ENCODE measurements at regions of chr19 and their contacts with region 1.

Region 1: DNA sequence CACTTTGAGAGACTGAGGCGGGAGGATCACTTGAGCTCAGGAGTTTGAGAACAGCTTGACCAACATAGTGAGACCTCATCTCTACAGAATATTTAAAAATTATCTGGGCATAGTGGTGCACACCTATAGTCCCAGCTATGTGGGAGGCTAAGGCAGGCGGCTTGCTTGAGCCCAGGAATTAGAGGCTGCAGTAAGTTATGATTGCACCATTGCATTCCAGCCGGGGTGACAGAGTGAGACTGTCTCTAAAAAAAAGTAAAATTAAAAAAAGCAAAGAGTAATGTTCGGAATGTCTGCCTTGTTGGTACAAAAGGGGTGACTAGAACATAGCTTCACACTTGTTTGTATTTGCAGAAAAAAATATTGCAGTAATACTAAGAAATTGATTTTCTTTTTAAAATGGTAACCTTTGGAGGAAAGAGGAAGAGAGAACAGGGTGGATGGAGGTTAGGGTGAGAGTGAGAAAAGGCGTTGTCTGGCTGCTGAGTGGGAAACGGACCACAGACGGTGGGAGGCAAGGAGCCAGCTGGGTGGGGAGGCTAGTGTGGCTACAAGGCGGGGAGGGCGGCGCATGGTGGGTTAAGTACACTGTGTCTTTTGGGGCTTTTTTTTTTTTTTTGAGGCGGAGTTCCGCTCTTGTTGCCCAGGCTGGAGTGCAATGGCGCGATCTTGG is 10.2 kb downstream of the PPP1R14A start:
- DNase-seq: no peak
- H3K4me3 ChIP-seq: no peak overlapping the region
- H3K27ac ChIP-seq: no peak overlapping the region
- H3K4me1 ChIP-seq: peaks cover 7% of the 10 kb centered on the region
- H3K27me3 ChIP-seq: no peaks in the 10 kb centered on the region
- CTCF ChIP-seq: no peak

Region 2: GRCh38 chr19:38022791-38023670 is 222.9 kb before region 1 on chr19:
- CTCF ChIA-PET with region 1: interaction called, 16 read pairs
- POLR2A ChIA-PET with region 1: no interaction called
- intact Hi-C with region 1: no loop called
- DNase-seq: no peak
- H3K4me3 ChIP-seq: no peak overlapping the region
- H3K27ac ChIP-seq: no peak overlapping the region
- H3K4me1 ChIP-seq: no peaks in the 10 kb centered on the region
- H3K27me3 ChIP-seq: no peaks in the 10 kb centered on the region
- CTCF ChIP-seq: no peak

Region 3: DNA sequence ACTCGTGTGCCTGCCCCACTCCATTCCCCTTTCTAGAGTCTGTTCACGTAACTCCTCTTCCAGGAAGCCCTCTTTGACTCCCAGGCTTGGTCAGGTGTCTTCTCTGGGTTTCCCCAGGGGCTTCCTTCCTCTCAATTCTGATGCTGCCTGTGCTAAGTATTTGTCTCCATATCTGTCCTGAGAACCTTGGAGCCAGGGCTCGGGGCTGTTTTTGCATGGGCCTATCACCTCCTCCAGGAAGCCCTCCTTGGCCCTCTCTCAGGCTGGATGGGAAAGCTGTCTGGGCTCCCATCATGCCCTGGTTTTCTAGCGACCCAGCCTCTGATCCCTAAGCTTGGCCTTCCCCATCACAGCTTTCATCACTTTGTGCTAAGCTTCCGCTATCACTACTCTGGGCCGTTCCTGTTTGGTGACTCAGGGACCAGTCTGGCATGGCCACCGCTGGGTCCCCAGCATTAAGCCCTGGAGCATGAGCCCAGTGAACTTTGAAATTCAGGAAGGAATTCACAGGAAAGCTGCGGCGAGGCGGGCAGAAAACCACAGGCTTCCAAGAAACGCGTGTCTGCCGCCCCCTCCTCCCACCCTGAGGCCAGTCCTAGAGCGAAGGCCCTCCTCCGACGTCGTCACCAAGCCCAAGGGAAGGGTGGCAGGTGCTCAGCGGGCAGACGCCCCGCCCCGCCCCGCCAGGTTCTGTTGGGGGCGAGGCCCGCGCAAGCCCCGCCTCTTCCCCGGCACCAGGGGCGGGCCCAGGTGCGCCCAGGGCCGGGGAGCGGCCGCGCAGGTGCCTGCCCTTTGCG is 17.9 kb after region 1 on chr19:
- CTCF ChIA-PET with region 1: interaction called, 9 read pairs
- POLR2A ChIA-PET with region 1: no interaction called
- intact Hi-C with region 1: loop called (anchors 2 kb)
- DNase-seq: peak; percentile 97 to 99
- H3K4me3 ChIP-seq: peak overlapping the region; percentile 34; the same call in 1 of the 2 replicates
- H3K27ac ChIP-seq: peak overlapping the region; percentile 94
- H3K4me1 ChIP-seq: peaks cover 35% of the 10 kb centered on the region
- H3K27me3 ChIP-seq: no peaks in the 10 kb centered on the region
- CTCF ChIP-seq: no peak

Region 4: DNA sequence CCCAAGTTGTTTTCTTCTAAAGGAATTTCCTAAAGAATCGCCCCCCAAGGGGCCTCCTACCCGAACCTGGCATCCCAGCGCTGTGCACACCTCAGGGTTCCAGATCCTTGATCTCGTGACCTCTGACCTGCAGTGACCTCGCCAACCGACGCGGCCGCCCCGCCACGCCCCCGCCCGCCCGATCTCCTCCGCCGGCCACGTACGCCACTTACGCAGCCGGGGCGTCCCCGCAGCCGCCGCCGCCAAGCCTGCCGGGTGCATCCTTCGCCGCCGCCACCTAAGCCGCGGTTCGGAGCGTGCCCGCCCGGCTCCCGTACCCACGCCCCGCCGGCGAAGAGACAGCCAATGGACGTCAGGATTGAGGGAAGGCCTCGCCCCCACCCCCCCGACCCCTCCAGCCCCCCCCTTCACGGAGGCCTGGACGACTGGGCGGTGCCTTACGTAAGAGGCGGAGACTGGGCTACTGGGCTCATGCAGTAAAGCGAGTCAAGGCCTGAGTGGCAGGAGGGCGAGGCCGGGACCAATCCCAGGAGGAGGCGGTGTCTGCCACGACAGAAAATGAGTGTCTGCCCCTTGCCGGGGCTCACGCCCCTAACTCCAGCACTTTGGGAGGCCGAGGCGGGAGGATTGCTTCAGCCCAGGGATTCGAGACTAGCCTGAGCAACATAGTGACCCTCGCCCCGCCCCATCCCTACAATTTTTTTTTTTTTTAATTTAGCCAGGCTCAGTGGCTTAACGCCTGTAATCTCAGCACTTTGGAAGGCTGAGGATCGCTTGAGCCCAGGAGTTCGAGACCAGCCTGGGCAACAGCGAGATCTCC is 69.9 kb after region 1 on chr19 and contains the start of gene YIF1B:
- CTCF ChIA-PET with region 1: interaction called, 4 read pairs
- POLR2A ChIA-PET with region 1: interaction called, 5 read pairs
- intact Hi-C with region 1: loop called (anchors 5 kb)
- DNase-seq: peak; percentile 94 to 96
- H3K4me3 ChIP-seq: peak within 1 kb of the TSS; percentile 60
- H3K27ac ChIP-seq: peak within 1 kb of the TSS; percentile 67
- H3K4me1 ChIP-seq: peaks cover 21% of the 10 kb centered on the region; the same call in 1 of the 2 replicates
- H3K27me3 ChIP-seq: peaks cover 16% of the 10 kb centered on the region
- CTCF ChIP-seq: no peak
- total RNA-seq, gene YIF1B: 33.6 and 39.8 TPM in 2 replicates